Activated CD4-positive, alpha-beta T cell treated with anti-CD3 and anti-CD28 coated beads for 36 hours (primary cell): ENCODE measurements at regions of chr14 and their contacts with region 1.

Region 1: DNA sequence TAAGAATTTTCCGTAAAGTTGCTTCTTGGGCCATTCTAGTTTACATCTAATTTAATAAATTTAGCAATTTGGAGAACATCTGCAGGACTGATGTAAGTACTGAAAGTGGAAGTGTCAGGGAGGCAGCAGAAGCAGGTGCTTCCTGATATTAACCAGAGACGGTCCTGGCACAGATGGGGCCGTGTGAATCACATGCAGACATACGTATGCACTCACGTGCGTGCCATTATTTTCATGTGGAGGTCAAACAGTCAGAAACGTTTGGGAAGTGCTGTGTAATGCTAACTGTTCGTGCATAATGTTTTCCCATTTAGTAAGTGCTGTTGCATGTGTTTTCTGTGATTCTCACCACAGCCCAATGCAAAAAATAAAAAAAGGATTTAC is 87.8 kb upstream of the DYNC1H1 start:
- DNase-seq: peak; percentile 86
- ATAC-seq: peak; percentile 62
- H3K4me3 Mint-ChIP-seq: peak overlapping the region; percentile 66
- H3K27ac Mint-ChIP-seq: peak overlapping the region; percentile 94
- H3K4me1 Mint-ChIP-seq: peaks cover 91% of the 10 kb centered on the region
- H3K27me3 Mint-ChIP-seq: no peaks in the 10 kb centered on the region

Region 2: DNA sequence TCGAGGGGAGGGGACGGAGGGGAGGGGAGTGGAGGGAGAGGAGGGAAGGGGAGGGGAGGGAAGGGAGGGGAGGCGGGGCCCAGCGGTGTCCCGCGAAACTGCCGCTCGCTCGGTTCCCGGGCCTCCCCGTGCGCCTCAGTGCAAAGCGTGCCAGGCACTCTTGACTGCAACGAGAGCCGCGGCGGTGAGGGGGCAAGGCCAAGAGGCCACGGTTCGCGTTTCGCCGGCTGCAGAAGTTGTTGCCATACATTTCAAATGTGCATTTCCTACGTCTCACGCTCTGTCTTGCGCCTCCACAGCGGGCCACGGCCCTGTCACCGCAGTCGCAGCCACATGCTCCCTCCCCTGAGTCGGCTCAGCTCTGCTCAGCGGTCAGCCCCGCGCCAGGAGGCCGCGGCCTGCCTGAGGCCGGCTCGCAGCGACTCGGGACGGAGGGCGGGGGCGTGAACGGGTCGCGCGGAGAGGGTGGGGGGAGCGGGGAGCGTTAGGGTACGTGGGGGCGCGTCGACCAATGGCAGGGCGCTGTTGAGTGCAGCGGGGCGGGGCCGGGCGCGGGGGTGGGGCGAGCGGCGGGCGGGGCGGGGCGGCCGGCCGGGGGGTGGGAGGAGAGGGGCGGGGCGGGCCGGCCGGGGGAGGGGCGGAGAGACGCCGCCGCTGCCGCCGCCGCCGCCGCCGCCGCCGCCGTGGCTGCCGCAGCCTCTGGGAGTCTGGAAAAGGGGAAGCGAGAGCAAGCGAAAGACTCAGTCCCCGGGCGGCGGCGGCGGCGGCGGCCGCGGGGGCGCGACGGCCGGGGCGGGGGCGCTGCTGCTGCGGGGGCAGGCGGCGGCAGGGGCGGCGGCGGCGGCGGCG is 115.3 kb before region 1 on chr14 and contains the start of gene PPP2R5C:
- CTCF ChIA-PET with region 1: no interaction called
- POLR2A ChIA-PET with region 1: interaction called, 4 read pairs
- intact Hi-C with region 1: loop called in 1 of 2 experiments (anchors 2 kb)
- DNase-seq: peak; percentile 94
- ATAC-seq: peak; percentile 65
- H3K4me3 Mint-ChIP-seq: peak within 1 kb of the TSS; percentile 85
- H3K27ac Mint-ChIP-seq: peak within 1 kb of the TSS; percentile 78
- H3K4me1 Mint-ChIP-seq: peaks cover 43% of the 10 kb centered on the region
- H3K27me3 Mint-ChIP-seq: no peaks in the 10 kb centered on the region
- total RNA-seq, gene PPP2R5C: 232 to 281 TPM

Region 3: GRCh38 chr14:101774006-101774795 is 102.3 kb before region 1 on chr14:
- CTCF ChIA-PET with region 1: interaction called, 15 read pairs
- POLR2A ChIA-PET with region 1: interaction called, 4 read pairs
- intact Hi-C with region 1: loop called in 1 of 2 experiments (anchors 5 kb)
- DNase-seq: no peak
- ATAC-seq: no peak
- H3K4me3 Mint-ChIP-seq: no peak overlapping the region
- H3K27ac Mint-ChIP-seq: no peak overlapping the region
- H3K4me1 Mint-ChIP-seq: peaks cover 14% of the 10 kb centered on the region
- H3K27me3 Mint-ChIP-seq: peaks cover 1% of the 10 kb centered on the region

Region 4: GRCh38 chr14:101843665-101844064 is 32.9 kb before region 1 on chr14:
- CTCF ChIA-PET with region 1: interaction called, 14 read pairs
- POLR2A ChIA-PET with region 1: interaction called, 22 read pairs
- intact Hi-C with region 1: loop called (anchors 1 kb)
- DNase-seq: peak; percentile 78
- ATAC-seq: peak; percentile 66
- H3K4me3 Mint-ChIP-seq: no peak overlapping the region
- H3K27ac Mint-ChIP-seq: peak overlapping the region; percentile 82
- H3K4me1 Mint-ChIP-seq: peaks cover 87% of the 10 kb centered on the region
- H3K27me3 Mint-ChIP-seq: no peaks in the 10 kb centered on the region

Region 5: GRCh38 chr14:102020058-102020971 is 143.8 kb after region 1 on chr14:
- CTCF ChIA-PET with region 1: no interaction called
- POLR2A ChIA-PET with region 1: interaction called, 3 read pairs
- intact Hi-C with region 1: loop called in 1 of 2 experiments (anchors 1 kb)
- DNase-seq: peak; percentile 79
- ATAC-seq: peak; percentile 89
- H3K4me3 Mint-ChIP-seq: peak overlapping the region; percentile 13
- H3K27ac Mint-ChIP-seq: peak overlapping the region; percentile 88
- H3K4me1 Mint-ChIP-seq: peaks cover 20% of the 10 kb centered on the region
- H3K27me3 Mint-ChIP-seq: no peaks in the 10 kb centered on the region

Region 6: GRCh38 chr14:102819176-102819628 is 942.7 kb after region 1 on chr14:
- CTCF ChIA-PET with region 1: no interaction called
- POLR2A ChIA-PET with region 1: no interaction called
- intact Hi-C with region 1: loop called in 1 of 2 experiments (anchors 5 kb)
- DNase-seq: peak; percentile 91
- ATAC-seq: peak; percentile 74
- H3K4me3 Mint-ChIP-seq: peak overlapping the region; percentile 61
- H3K27ac Mint-ChIP-seq: peak overlapping the region; percentile 94
- H3K4me1 Mint-ChIP-seq: peaks cover 87% of the 10 kb centered on the region
- H3K27me3 Mint-ChIP-seq: no peaks in the 10 kb centered on the region